RWPE1 (cell line): ENCODE measurements at regions of chr14 and their contacts with region 1.

Region 1: GRCh38 chr14:59238216-59238615 is 49.7 kb downstream of the DAAM1 start:
- DNase-seq: no peak
- H3K27ac ChIP-seq: no peak overlapping the region
- CTCF ChIP-seq: no peak

Region 2: DNA sequence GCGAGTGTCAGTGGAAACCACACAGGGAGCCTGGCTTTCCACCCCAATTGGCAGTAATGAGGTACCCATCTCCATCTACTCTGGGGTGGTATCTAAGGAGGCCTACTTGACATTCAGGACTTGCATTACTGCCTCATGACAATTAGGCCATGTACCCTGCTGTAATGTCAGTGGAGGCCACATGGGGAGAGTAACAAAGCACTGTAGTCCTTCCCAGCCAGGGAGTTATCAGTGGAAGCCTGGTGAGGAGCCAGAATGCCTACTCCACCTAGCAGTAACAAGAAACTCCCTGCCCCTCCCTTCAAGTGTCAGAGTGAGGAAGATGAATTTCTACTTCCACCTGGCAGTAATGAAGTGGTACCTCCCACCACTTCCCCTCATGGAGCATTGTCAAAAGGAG is 823.4 kb before region 1 on chr14:
- CTCF ChIA-PET with region 1: no interaction called
- POLR2A ChIA-PET with region 1: no interaction called
- DNase-seq: no peak
- H3K27ac ChIP-seq: no peak overlapping the region
- CTCF ChIP-seq: no peak

Region 3: DNA sequence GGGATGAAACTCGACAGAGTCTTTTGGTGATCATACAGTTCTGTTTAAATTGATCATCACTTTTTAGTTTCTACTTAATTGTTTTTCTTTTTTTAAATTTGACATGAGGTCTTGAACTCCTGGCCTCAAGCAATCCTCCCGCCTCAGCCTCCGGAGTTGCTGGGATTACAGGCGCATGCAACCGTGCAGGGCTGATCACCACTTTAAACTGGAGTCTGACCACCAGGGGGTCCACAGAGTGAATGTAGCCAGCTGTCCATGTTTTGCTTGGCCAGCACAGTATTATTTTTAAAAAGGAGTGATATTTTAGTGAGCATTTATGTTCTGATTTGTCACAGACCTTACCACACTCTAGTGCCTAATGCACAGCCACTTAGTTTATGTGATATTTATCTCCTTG is 39.0 kb before region 1 on chr14:
- CTCF ChIA-PET with region 1: no interaction called
- POLR2A ChIA-PET with region 1: no interaction called
- DNase-seq: no peak
- H3K27ac ChIP-seq: no peak overlapping the region
- CTCF ChIP-seq: no peak

Region 4: DNA sequence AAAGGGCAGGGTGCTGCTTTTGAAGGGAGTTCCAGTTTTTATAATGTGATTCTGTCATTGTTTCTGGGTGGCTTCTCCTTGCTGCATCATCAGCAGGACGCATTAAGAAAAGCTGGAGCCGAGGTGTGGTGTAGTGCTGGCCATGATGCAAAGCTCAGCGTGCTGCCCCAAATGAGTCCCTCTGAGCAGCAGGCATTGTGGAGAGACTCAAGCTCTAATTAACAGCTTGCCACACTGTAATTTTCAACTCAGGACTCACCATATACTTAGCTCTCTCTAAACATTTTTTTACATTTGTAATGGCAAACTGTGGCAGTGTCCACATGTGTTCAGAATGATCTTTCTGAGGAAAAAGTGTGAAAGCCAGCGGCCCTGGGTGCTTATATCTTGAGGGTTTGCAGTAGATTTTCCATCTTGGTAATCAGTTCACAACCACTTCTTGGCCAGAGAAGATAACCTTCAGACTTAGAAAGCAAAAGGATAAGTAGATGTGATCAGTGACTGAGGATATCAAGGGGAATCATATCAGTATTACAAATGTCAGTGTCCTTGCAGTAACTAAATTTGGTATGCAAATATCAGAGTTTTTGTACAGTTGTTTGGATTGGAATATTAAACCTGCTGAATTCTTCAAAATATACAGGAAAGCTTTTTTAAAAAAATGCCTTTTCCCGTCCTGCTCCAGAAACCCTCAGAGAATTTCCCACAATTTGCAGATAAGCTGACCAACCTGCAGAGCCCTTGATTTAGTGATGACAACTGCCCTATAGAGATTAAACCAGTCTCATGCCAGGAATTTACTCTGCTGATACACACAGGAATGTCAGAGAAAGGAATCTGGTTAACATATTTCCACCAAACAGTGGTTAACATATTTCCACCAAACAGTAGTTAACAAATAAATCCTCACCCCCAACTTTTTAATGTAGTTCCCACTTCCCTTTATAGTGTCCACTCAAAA is 13.9 kb after region 1 on chr14:
- CTCF ChIA-PET with region 1: interaction called, 5 read pairs
- POLR2A ChIA-PET with region 1: interaction called, 11 read pairs
- DNase-seq: no peak
- H3K27ac ChIP-seq: no peak overlapping the region
- CTCF ChIP-seq: no peak

Region 5: DNA sequence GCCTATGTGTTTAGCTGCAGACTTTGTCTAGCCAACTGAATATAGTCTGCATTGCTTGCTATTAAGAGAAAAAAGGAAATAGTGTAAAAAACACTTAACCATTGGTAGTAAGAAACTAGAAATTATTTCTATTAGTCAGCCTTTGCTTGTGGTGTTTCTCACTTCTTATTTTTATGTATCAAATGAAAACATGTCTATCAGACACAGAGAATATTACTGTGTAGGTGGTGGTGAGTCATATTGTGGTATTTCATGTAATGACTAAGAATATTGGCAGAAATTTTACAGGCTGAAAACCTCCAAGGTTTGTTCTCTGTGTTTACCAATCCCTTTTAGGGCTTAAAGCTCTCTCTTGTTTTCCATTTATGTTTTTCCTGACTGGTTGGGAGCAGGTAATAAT is 37.4 kb after region 1 on chr14:
- CTCF ChIA-PET with region 1: no interaction called
- POLR2A ChIA-PET with region 1: no interaction called
- DNase-seq: peak; percentile 70
- H3K27ac ChIP-seq: no peak overlapping the region
- CTCF ChIP-seq: no peak

Region 6: DNA sequence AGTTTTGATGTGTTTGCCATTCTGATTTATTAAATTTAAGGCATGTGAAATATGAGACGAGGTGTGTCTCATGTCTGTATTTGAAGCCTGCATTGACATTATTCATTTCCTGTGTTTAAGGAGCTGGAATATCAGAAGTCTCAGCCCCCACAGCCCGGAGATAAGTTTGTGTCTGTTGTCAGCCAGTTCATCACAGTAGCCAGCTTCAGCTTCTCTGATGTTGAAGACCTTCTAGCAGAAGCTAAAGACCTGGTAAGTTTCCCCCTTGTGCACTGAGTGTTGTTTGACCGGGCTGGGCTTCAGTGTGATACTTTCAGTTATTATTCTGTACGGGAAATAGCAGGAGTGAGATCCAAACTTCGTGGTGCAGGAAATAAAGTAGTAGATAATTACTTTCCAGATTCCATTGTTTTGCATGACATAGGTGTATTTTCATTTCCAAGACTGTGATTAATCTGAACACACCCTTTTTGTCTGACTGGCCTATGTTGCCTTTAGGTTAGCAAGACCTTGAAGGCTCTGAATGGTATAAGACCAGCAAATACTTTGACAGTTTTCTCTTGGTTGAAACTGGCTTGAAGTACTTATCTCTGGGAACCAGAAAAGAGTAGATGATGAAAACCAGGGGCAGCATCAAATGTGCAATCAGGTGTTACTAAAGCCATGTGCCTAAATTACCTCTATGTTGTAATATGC is 125.5 kb after region 1 on chr14:
- CTCF ChIA-PET with region 1: no interaction called
- POLR2A ChIA-PET with region 1: no interaction called
- DNase-seq: peak; percentile 54
- H3K27ac ChIP-seq: peak overlapping the region; percentile 51
- CTCF ChIP-seq: no peak